ENCODE measurements at regions of chr5 and their contacts with region 1.

Region 1: DNA sequence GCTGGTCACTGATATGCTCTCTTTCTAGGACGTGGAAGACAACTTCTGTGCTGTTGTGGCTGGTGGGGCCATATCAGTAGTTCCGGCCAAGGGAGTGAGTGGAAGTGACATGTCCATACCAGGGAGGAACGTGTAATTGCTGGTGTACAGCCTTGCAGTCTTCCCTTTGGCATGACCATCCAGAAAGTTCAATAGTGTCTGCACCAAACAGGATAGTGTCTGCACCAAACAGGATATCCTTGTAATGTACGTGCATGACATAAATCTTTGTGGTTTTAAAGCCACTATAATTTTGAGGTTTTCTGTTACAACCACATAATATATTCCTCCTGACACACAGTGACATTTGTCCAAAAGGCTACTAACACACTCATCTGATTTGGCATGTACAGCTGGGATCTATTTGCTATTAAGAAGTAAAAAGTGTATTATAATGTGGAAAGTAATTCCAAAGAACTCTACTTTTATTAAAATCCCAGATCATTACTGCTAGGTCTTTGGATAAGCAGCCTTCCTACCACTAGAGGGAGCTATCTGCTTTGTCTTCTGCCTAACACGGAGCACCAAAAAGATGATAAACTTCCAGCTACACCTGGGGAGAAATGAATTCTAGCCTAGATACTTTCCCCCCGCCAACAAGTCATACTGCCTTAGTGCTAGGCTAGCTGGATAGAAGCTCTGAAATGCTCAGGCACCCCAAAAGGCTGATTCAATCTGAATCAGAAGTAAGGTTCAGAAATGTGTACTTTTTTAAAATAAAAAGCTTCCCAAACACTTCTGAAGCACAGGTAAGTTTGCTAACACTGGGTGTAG is 52.7 kb downstream of the RNF145 start:
- DNase-seq: peak in 7 of 9 donors; percentile 53 to 77 (median 72)
- ATAC-seq: peak; percentile 89
- H3K4me3 ChIP-seq: no peak overlapping the region
- H3K4me3 Mint-ChIP-seq: peak overlapping the region in 1 of 10 donors; percentile 50
- H3K27ac ChIP-seq: peak overlapping the region; percentile 16
- H3K27ac Mint-ChIP-seq: peak overlapping the region; percentile 26 to 92 (median 85)
- H3K4me1 ChIP-seq: peaks cover 8 to 9% of the 10 kb centered on the region in 2 donors
- H3K4me1 Mint-ChIP-seq: peaks cover 0 to 35% (median 23%) of the 10 kb centered on the region in 7 donors
- H3K27me3 ChIP-seq: no peaks in the 10 kb centered on the region
- H3K27me3 Mint-ChIP-seq: no peaks in the 10 kb centered on the region

Region 2: GRCh38 chr5:157721159-157721558 is 1435.5 kb before region 1 on chr5:
- CTCF ChIA-PET with region 1: no interaction called
- POLR2A ChIA-PET with region 1: no interaction called
- intact Hi-C with region 1: no loop called
- DNase-seq: no peak
- ATAC-seq: no peak
- H3K4me3 ChIP-seq: no peak overlapping the region
- H3K4me3 Mint-ChIP-seq: no peak overlapping the region
- H3K27ac ChIP-seq: no peak overlapping the region
- H3K27ac Mint-ChIP-seq: no peak overlapping the region
- H3K4me1 ChIP-seq: no peaks in the 10 kb centered on the region
- H3K4me1 Mint-ChIP-seq: peaks cover 9 to 33% (median 16%) of the 10 kb centered on the region in 7 donors
- H3K27me3 ChIP-seq: no peaks in the 10 kb centered on the region
- H3K27me3 Mint-ChIP-seq: peaks cover 0 to 6% (median 0%) of the 10 kb centered on the region in 5 donors

Region 3: DNA sequence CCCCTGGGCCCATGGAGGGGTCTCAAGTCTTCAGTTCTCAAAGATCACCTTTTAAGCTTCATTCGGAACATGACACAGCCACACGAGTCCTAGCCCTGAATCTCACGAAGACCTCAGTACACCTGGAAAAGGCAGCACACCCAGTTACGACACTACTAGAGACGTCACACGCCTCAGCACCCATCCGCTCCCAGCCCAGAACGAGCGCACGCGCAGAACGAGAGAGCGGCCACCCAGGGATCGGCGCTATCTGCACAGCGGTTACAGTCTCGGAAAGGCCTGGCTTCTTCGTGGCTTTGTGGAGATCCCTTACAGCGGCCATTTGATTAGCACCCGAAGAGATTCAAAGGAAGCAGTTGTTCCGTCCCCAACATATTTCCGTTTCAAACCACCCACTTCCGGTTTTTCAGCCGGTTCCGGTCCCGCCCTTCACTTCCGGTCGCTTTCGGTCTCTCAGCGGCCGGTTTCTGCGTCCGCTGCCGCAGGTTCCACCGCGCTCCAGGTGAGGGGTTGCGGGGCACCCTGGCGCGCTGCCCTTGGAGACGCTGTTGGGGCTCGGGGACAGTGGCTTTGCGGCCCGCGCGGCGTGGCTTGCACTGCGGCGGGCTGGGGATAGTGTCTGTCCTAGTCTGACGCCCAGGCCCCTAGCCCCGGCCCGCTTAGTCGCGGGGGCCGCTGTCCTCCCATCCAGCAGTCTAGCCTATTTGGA is 106.4 kb after region 1 on chr5 and contains the start of gene UBLCP1:
- CTCF ChIA-PET with region 1: interaction called, 4 read pairs
- POLR2A ChIA-PET with region 1: no interaction called
- intact Hi-C with region 1: loop called (anchors 1 to 2 kb)
- DNase-seq: peak; percentile 65 to 88 (median 83)
- ATAC-seq: peak; percentile 91
- H3K4me3 ChIP-seq: peak within 1 kb of the TSS; percentile 76
- H3K4me3 Mint-ChIP-seq: peak within 1 kb of the TSS; percentile 89 to 99 (median 96)
- H3K27ac ChIP-seq: peak within 1 kb of the TSS; percentile 90
- H3K27ac Mint-ChIP-seq: peak within 1 kb of the TSS; percentile 97 to 100 (median 99)
- H3K4me1 ChIP-seq: peaks cover 8 to 17% of the 10 kb centered on the region in 2 donors
- H3K4me1 Mint-ChIP-seq: peaks cover 28 to 65% (median 52%) of the 10 kb centered on the region in 7 donors
- H3K27me3 ChIP-seq: no peaks in the 10 kb centered on the region
- H3K27me3 Mint-ChIP-seq: peaks cover 0 to 4% (median 0%) of the 10 kb centered on the region in 5 donors
- total RNA-seq, gene UBLCP1: 18.2 to 30.9 (median 30.2) TPM

Region 4: DNA sequence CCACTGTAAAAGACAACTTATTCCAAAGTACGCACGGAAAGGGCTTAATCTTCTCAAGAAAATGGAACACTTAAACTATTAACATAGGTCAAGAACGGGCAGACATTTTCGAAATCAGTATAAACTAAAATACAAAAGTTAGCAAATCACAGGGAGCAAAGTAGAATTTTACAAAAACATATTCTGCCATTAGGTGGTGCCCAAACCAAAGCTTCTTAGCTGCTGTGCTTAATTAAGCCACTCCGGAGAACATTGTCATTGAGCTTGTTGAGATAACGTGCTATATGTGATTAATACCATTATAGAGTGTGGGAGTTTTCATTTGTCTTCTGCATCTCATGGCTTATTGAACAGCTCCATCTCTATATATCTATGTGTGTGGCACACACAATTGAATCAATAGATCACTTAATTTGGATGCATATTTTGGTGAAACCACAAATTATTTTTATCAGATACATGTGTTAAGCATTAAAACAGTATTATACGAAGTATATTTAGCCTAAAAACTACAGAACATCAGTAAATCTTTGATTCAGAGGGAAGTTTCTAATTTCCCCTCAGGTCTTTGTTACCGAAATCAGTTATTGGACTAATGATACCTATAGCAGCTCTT is 129.9 kb after region 1 on chr5:
- CTCF ChIA-PET with region 1: interaction called, 8 read pairs
- POLR2A ChIA-PET with region 1: no interaction called
- intact Hi-C with region 1: loop called in 1 of 2 experiments (anchors 1 kb)
- DNase-seq: peak in 7 of 9 donors; percentile 16 to 53 (median 34)
- ATAC-seq: peak; percentile 60
- H3K4me3 ChIP-seq: no peak overlapping the region
- H3K4me3 Mint-ChIP-seq: no peak overlapping the region
- H3K27ac ChIP-seq: no peak overlapping the region
- H3K27ac Mint-ChIP-seq: peak overlapping the region in 1 of 9 donors; percentile 19
- H3K4me1 ChIP-seq: no peaks in the 10 kb centered on the region
- H3K4me1 Mint-ChIP-seq: peaks cover 0 to 1% (median 0%) of the 10 kb centered on the region in 7 donors
- H3K27me3 ChIP-seq: no peaks in the 10 kb centered on the region
- H3K27me3 Mint-ChIP-seq: peaks cover 0 to 4% (median 0%) of the 10 kb centered on the region in 5 donors

Region 5: GRCh38 chr5:159331093-159331973 is 174.7 kb after region 1 on chr5:
- CTCF ChIA-PET with region 1: no interaction called
- POLR2A ChIA-PET with region 1: no interaction called
- intact Hi-C with region 1: loop called in 1 of 2 experiments (anchors 5 kb)
- DNase-seq: peak; percentile 43 to 79 (median 65)
- ATAC-seq: peak; percentile 93
- H3K4me3 ChIP-seq: peak overlapping the region; percentile 46
- H3K4me3 Mint-ChIP-seq: peak overlapping the region; percentile 66 to 80 (median 74)
- H3K27ac ChIP-seq: peak overlapping the region; percentile 22
- H3K27ac Mint-ChIP-seq: peak overlapping the region in 6 of 9 donors; percentile 9 to 75 (median 64)
- H3K4me1 ChIP-seq: peaks cover 0 to 4% of the 10 kb centered on the region in 2 donors
- H3K4me1 Mint-ChIP-seq: peaks cover 3 to 52% (median 23%) of the 10 kb centered on the region in 7 donors
- H3K27me3 ChIP-seq: no peaks in the 10 kb centered on the region
- H3K27me3 Mint-ChIP-seq: peaks cover 0 to 35% (median 0%) of the 10 kb centered on the region in 5 donors

Region 6: GRCh38 chr5:159915904-159916840 is 759.5 kb after region 1 on chr5 and contains the start of gene ADRA1B:
- CTCF ChIA-PET with region 1: interaction called, 4 read pairs
- POLR2A ChIA-PET with region 1: no interaction called
- intact Hi-C with region 1: loop called (anchors 1 to 10 kb)
- DNase-seq: peak in 8 of 9 donors; percentile 16 to 47 (median 22)
- ATAC-seq: peak; percentile 77
- H3K4me3 ChIP-seq: no peak within 1 kb of the TSS
- H3K4me3 Mint-ChIP-seq: peak within 1 kb of the TSS; percentile 56 to 78 (median 71)
- H3K27ac ChIP-seq: no peak within 1 kb of the TSS
- H3K27ac Mint-ChIP-seq: no peak within 1 kb of the TSS
- H3K4me1 ChIP-seq: no peaks in the 10 kb centered on the region
- H3K4me1 Mint-ChIP-seq: peaks cover 4 to 15% (median 9%) of the 10 kb centered on the region in 7 donors
- H3K27me3 ChIP-seq: peaks cover 3 to 8% of the 10 kb centered on the region in 2 donors
- H3K27me3 Mint-ChIP-seq: peaks cover 59 to 67% (median 62%) of the 10 kb centered on the region in 5 donors
- total RNA-seq, gene ADRA1B: 0.10 TPM in 1 of 5 experiments, not detected in the others

Region 7: GRCh38 chr5:160342403-160342941 is 1185.8 kb after region 1 on chr5:
- CTCF ChIA-PET with region 1: no interaction called
- POLR2A ChIA-PET with region 1: no interaction called
- intact Hi-C with region 1: loop called in 1 of 2 experiments (anchors 1 kb)
- DNase-seq: no peak
- ATAC-seq: no peak
- H3K4me3 ChIP-seq: no peak overlapping the region
- H3K4me3 Mint-ChIP-seq: no peak overlapping the region
- H3K27ac ChIP-seq: no peak overlapping the region
- H3K27ac Mint-ChIP-seq: no peak overlapping the region
- H3K4me1 ChIP-seq: no peaks in the 10 kb centered on the region
- H3K4me1 Mint-ChIP-seq: peaks cover 0 to 4% (median 0%) of the 10 kb centered on the region in 7 donors
- H3K27me3 ChIP-seq: no peaks in the 10 kb centered on the region
- H3K27me3 Mint-ChIP-seq: peaks cover 0 to 4% (median 0%) of the 10 kb centered on the region in 5 donors

Measured in naive thymus-derived CD4-positive, alpha-beta T cell (primary cell).